CD8-positive, alpha-beta memory T cell (primary cell): ENCODE measurements at regions of chr3 and their contacts with region 1.

Region 1: GRCh38 chr3:66253790-66254620 is 33.2 kb downstream of the SLC25A26 start:
- DNase-seq: peak in 2 of 5 donors; percentile 9 to 21
- H3K4me3 ChIP-seq: no peak overlapping the region
- H3K4me3 Mint-ChIP-seq: no peak overlapping the region
- H3K27ac ChIP-seq: no peak overlapping the region
- H3K27ac Mint-ChIP-seq: no peak overlapping the region
- H3K4me1 ChIP-seq: no peaks in the 10 kb centered on the region
- H3K4me1 Mint-ChIP-seq: peaks cover 0 to 3% (median 2%) of the 10 kb centered on the region in 3 donors
- H3K27me3 ChIP-seq: no peaks in the 10 kb centered on the region
- H3K27me3 Mint-ChIP-seq: no peaks in the 10 kb centered on the region

Region 2: DNA sequence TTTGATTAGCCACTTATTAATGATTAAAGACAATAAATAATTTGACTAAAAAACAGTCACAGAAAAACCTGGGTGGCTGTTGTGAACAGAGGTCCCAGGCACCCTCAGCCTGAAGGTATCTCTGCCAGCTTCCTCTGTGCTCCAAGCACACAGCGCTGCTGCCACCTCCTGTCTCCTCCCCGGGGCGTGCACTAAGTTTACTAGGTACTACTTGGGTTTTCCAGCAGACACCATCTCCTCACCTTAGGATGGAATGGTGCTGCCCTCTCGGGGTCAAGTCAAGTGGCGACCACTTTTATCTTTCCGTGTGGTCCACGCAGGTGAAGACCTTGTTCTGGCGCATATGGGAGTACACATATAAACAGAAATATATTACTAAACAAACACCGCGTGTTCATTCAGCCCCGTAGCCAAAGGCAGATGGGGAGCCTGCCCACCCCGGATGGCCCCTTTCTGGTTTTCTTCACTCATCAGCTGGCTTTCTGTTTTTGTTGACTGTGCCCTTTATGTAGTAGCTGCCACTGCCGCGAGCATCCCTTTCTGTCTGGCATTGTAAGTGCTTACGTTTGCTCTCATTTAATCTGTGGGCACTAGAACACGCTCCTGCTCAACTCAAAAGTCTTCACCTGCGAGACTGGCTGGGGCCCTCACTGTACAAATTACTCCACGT is 118.8 kb after region 1 on chr3:
- CTCF ChIA-PET with region 1: interaction called, 20 read pairs
- POLR2A ChIA-PET with region 1: no interaction called
- DNase-seq: peak in 4 of 5 donors; percentile 28 to 84 (median 47)
- H3K4me3 ChIP-seq: no peak overlapping the region
- H3K4me3 Mint-ChIP-seq: no peak overlapping the region
- H3K27ac ChIP-seq: no peak overlapping the region
- H3K27ac Mint-ChIP-seq: peak overlapping the region; percentile 7 to 85 (median 68)
- H3K4me1 ChIP-seq: peaks cover 9% of the 10 kb centered on the region
- H3K4me1 Mint-ChIP-seq: peaks cover 25 to 36% (median 34%) of the 10 kb centered on the region in 3 donors
- H3K27me3 ChIP-seq: no peaks in the 10 kb centered on the region
- H3K27me3 Mint-ChIP-seq: no peaks in the 10 kb centered on the region

Region 3: DNA sequence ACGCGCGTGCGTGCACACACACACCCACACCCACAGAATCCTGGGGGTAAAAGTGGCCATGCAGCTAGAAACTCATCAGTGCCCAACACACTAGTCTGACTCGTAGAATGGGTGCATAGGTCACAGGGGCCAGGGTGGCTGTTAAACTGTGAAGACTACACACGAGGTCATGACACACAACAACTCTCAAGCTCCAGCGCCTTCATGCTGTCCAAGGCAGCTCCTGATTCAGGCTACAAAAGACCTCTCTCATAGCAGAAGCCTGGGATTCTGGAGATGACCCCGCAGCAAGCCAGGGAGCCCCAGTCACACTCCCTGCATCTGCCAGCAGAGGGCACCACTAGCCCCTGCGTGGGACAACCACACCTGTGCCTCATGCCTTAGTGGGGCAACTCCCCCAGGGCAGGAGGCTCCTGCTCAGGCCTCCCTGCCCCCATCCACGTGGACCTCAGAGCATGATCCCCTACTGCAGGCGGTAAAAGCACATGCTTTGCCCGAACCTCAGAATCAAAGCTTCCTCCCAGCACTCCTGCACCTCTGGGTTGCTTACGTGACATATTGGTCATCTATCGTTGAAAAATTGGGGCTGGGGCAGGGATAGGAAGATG is 153.7 kb after region 1 on chr3:
- CTCF ChIA-PET with region 1: interaction called, 15 read pairs
- POLR2A ChIA-PET with region 1: no interaction called
- DNase-seq: peak; percentile 54 to 79 (median 59)
- H3K4me3 ChIP-seq: no peak overlapping the region
- H3K4me3 Mint-ChIP-seq: no peak overlapping the region
- H3K27ac ChIP-seq: no peak overlapping the region
- H3K27ac Mint-ChIP-seq: peak overlapping the region in 3 of 8 donors; percentile 7 to 45 (median 38)
- H3K4me1 ChIP-seq: no peaks in the 10 kb centered on the region
- H3K4me1 Mint-ChIP-seq: peaks cover 3% of the 10 kb centered on the region in 3 donors
- H3K27me3 ChIP-seq: no peaks in the 10 kb centered on the region
- H3K27me3 Mint-ChIP-seq: no peaks in the 10 kb centered on the region

Region 4: GRCh38 chr3:66822186-66823008 is 568.4 kb after region 1 on chr3:
- CTCF ChIA-PET with region 1: interaction called, 67 read pairs
- POLR2A ChIA-PET with region 1: no interaction called
- DNase-seq: peak; percentile 40 to 74 (median 48)
- H3K4me3 ChIP-seq: no peak overlapping the region
- H3K4me3 Mint-ChIP-seq: no peak overlapping the region
- H3K27ac ChIP-seq: no peak overlapping the region
- H3K27ac Mint-ChIP-seq: no peak overlapping the region
- H3K4me1 ChIP-seq: no peaks in the 10 kb centered on the region
- H3K4me1 Mint-ChIP-seq: no peaks in the 10 kb centered on the region
- H3K27me3 ChIP-seq: no peaks in the 10 kb centered on the region
- H3K27me3 Mint-ChIP-seq: peaks cover 0 to 7% of the 10 kb centered on the region in 2 donors

Region 5: GRCh38 chr3:67094774-67095173 is 840.8 kb after region 1 on chr3:
- CTCF ChIA-PET with region 1: no interaction called
- POLR2A ChIA-PET with region 1: no interaction called
- DNase-seq: no peak
- H3K4me3 ChIP-seq: no peak overlapping the region
- H3K4me3 Mint-ChIP-seq: no peak overlapping the region
- H3K27ac ChIP-seq: no peak overlapping the region
- H3K27ac Mint-ChIP-seq: no peak overlapping the region
- H3K4me1 ChIP-seq: no peaks in the 10 kb centered on the region
- H3K4me1 Mint-ChIP-seq: no peaks in the 10 kb centered on the region
- H3K27me3 ChIP-seq: no peaks in the 10 kb centered on the region
- H3K27me3 Mint-ChIP-seq: peaks cover 8 to 31% of the 10 kb centered on the region in 2 donors